ENCODE measurements at regions of chr4 and their contacts with region 1.

Region 1: GRCh38 chr4:3122081-3122563 is 47.6 kb downstream of the HTT start:
- DNase-seq: no peak
- H3K4me3 Mint-ChIP-seq: no peak overlapping the region
- H3K27ac Mint-ChIP-seq: no peak overlapping the region
- H3K4me1 Mint-ChIP-seq: peaks cover 6% of the 10 kb centered on the region
- H3K27me3 Mint-ChIP-seq: no peaks in the 10 kb centered on the region

Region 2: DNA sequence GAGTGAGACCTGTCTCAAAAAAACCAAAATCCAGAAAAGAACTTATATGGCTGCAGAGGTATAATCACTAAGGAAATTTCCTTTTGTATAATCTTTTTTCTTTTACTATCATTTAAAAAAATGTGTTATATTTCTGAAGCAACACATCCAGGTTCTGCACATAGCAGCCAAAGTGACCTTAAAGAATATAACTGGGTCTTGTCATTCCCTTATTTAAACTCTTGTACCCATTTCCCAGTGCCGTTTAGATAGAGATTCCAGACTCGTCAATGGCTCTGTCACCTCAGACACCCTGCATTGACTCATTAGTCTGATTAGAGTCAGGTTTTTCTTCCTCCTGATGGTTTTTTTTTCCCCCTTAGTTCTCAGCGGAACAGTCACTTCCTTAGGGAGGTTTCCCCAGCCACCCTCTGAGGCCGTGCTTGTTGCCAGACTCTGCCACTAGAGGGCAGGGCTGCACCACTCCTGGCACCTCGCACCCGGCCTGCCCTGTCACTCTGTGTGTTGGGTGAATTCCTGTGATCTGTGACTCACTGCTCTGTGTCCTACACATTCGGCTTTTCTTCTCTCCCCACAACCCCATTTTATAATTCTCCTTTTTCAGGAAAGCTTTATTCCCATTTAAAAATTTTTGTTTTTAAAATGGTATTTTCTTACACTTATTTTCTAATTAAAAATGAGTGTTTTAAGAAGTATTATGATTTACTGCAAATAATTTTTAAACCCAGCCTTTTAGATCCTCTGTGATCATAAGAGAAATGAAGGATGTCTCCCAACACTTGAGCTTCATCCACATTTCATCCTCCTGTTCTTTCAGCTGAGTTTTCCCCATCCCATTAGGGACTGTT is 15.6 kb before region 1 on chr4:
- CTCF ChIA-PET with region 1: interaction called, 10 read pairs
- POLR2A ChIA-PET with region 1: no interaction called
- DNase-seq: peak; percentile 87
- H3K4me3 Mint-ChIP-seq: no peak overlapping the region
- H3K27ac Mint-ChIP-seq: peak overlapping the region; percentile 52
- H3K4me1 Mint-ChIP-seq: peaks cover 11% of the 10 kb centered on the region
- H3K27me3 Mint-ChIP-seq: no peaks in the 10 kb centered on the region